ENCODE measurements at regions of chr17 and their contacts with region 1.

Region 1: GRCh38 chr17:44636562-44636961 is 19.7 kb upstream of the MEIOC start:
- DNase-seq: peak; percentile 58
- H3K4me3 ChIP-seq: no peak overlapping the region
- H3K27ac ChIP-seq: no peak overlapping the region
- H3K4me1 ChIP-seq: no peaks in the 10 kb centered on the region
- H3K27me3 ChIP-seq: no peaks in the 10 kb centered on the region
- CTCF ChIP-seq: peak; percentile 73
- EP300 ChIP-seq: no peak
- RAD21 ChIP-seq: peak; percentile 91

Region 2: GRCh38 chr17:44581868-44582267 is 54.7 kb before region 1 on chr17:
- CTCF ChIA-PET with region 1: interaction called, 23 read pairs
- POLR2A ChIA-PET with region 1: no interaction called
- DNase-seq: peak; percentile 68
- H3K4me3 ChIP-seq: no peak overlapping the region
- H3K27ac ChIP-seq: no peak overlapping the region
- H3K4me1 ChIP-seq: peaks cover 0 to 3% of the 10 kb centered on the region in 2 experiments; a peak in 1 of 4 replicates
- H3K27me3 ChIP-seq: no peaks in the 10 kb centered on the region
- CTCF ChIP-seq: peak; percentile 54
- EP300 ChIP-seq: no peak
- RAD21 ChIP-seq: peak; percentile 68

Region 3: GRCh38 chr17:44655983-44656710 is 19.6 kb after region 1 on chr17 and contains the start of gene MEIOC:
- CTCF ChIA-PET with region 1: interaction called, 10 read pairs
- POLR2A ChIA-PET with region 1: no interaction called
- DNase-seq: peak; percentile 97
- H3K4me3 ChIP-seq: peak within 1 kb of the TSS; percentile 36 to 48; a peak in 3 of 4 replicates
- H3K27ac ChIP-seq: no peak within 1 kb of the TSS
- H3K4me1 ChIP-seq: peaks cover 0 to 6% of the 10 kb centered on the region in 2 experiments; a peak in 1 of 4 replicates
- H3K27me3 ChIP-seq: no peaks in the 10 kb centered on the region
- CTCF ChIP-seq: peak; percentile 47
- EP300 ChIP-seq: no peak
- RAD21 ChIP-seq: no peak
- polyA plus RNA-seq, gene MEIOC: 1.2 and 1.3 TPM in 2 replicates

Region 4: DNA sequence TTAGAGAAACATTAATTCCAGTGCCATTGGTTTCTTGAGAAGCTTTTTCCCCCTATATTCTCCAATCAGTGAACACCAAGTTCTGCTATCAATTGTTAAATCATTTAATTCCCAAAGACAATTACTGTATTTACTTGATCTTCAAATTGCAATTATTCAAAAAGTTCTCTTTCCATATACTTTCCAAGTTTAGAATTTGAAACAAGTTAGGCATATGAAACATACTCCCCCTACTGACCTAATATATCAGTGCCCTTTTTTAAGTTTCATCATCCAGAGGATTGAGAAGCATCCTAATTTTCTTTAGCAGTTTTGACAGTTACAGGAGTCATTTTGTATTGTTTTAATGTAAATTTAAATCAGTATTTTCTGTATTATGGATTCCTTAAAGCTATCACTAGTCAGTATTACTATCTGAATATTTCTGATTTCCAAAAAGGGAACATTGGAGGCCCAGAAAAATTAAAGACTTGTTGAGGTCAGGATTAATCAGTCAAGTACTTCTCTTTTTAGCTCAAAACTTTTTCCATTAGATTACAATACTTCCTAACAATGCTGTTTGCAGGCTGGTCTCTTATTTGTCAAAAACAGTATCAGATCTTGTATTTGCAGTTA is 36.0 kb after region 1 on chr17:
- CTCF ChIA-PET with region 1: interaction called, 11 read pairs
- POLR2A ChIA-PET with region 1: no interaction called
- DNase-seq: peak; percentile 34
- H3K4me3 ChIP-seq: no peak overlapping the region
- H3K27ac ChIP-seq: no peak overlapping the region
- H3K4me1 ChIP-seq: 0 out of 4 replicates have a peak, but pooled peaks cover 0 to 3% of the 10 kb centered on the region in 2 experiments
- H3K27me3 ChIP-seq: no peaks in the 10 kb centered on the region
- CTCF ChIP-seq: peak; percentile 76
- EP300 ChIP-seq: no peak
- RAD21 ChIP-seq: peak; percentile 57

Region 5: DNA sequence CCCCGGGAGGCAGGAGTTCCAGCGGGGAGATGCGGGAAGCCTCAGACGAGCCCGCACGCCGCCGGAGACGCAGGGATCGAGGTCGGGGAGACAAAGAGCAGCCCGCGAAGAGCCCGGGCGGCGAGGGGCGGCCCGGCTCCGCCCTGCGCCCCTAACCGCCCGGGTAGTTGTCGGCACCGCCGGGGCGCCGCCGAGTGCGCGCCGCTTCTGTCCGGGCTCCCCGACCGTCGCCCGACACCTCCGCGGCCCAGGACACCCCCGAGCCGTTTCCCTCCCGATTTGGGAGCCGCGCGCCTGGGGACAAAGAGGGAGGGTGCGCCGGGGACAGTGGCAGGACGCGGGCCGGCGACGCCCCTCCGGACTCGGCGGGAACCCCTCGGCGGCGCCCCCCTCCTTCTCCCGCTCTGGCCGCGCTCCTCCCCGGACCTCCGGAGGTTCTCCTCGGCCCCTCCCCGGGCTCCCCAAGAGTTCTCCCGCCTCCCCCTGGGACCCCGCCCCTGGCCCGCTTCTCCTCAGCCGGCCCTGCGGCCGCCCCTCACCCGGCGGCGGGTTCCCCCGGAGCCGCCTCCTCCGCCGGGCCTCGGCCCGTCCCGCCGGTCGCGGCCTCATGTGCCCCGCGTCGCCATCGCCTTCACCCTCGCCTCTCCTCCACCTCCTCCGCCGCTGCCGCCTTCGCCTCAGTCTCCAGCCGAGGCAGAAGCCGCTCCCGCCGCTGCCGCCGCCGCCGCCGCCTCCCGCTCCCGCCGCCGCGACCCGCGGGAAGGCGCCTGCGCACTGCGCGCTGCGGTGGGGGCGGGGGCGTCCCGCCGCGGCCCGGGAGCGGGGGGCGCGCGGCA is 193.2 kb after region 1 on chr17 and contains the start of gene GJC1:
- CTCF ChIA-PET with region 1: no interaction called
- POLR2A ChIA-PET with region 1: no interaction called
- DNase-seq: peak; percentile 91
- H3K4me3 ChIP-seq: peak within 1 kb of the TSS; percentile 66 to 73
- H3K27ac ChIP-seq: peak within 1 kb of the TSS; percentile 55 to 69
- H3K4me1 ChIP-seq: peaks cover 2 to 4% of the 10 kb centered on the region in 2 experiments; a peak in 3 of 4 replicates
- H3K27me3 ChIP-seq: no peaks in the 10 kb centered on the region
- CTCF ChIP-seq: no peak
- EP300 ChIP-seq: no peak
- RAD21 ChIP-seq: no peak
- polyA plus RNA-seq, gene GJC1: 15.2 and 15.6 TPM in 2 replicates

Region 6: GRCh38 chr17:44941712-44942331 is 305.3 kb after region 1 on chr17:
- CTCF ChIA-PET with region 1: no interaction called
- POLR2A ChIA-PET with region 1: no interaction called
- DNase-seq: peak; percentile 32
- H3K4me3 ChIP-seq: no peak overlapping the region
- H3K27ac ChIP-seq: peak overlapping the region; percentile 3 to 56; a peak in 2 of 4 replicates
- H3K4me1 ChIP-seq: peaks cover 0 to 15% of the 10 kb centered on the region in 2 experiments; a peak in 1 of 4 replicates
- H3K27me3 ChIP-seq: no peaks in the 10 kb centered on the region
- CTCF ChIP-seq: no peak
- EP300 ChIP-seq: no peak
- RAD21 ChIP-seq: no peak

Measured in SK-N-SH (cell line).